ENCODE measurements at regions of chr3 and their contacts with region 1.

Region 1: GRCh38 chr3:107235928-107236315 is 141.3 kb upstream of the CCDC54 start:
- DNase-seq: no peak
- H3K4me3 ChIP-seq: peak overlapping the region; percentile 64
- H3K27ac ChIP-seq: peak overlapping the region; percentile 74
- H3K4me1 ChIP-seq: peaks cover 42% of the 10 kb centered on the region
- H3K27me3 ChIP-seq: no peaks in the 10 kb centered on the region
- CTCF ChIP-seq: peak; percentile 93

Region 2: DNA sequence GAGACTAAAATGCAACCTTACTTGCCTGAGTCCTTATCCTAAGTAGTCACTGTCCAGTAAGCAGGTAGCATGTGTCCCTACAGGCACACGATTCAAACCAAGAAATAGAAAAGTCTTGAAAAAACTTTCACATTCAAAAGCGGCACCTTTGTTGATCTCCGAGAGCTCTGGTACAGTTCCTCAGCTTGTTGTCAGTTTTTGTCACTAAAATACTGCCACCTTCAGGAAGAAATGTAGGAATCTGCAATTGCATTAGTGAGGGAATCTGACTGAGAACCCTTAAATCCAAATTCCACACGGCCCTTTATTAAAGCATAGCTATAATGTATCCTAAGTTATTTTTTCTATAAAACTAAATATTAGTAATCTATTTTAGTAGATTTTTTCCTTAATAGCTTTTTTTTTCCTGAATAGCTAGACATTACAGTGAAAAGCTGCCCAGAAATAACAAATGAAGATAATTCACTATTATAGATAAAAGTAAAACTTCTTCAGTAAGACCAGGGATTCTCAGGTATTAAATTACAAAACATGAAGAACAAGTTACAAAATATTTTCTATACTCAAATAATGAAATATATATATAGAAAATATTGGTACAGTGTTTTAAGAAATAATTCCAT is 185.4 kb after region 1 on chr3:
- intact Hi-C with region 1: loop called (anchors 2 kb)
- DNase-seq: no peak
- H3K4me3 ChIP-seq: peak overlapping the region; percentile 55
- H3K27ac ChIP-seq: no peak overlapping the region
- H3K4me1 ChIP-seq: no peaks in the 10 kb centered on the region
- H3K27me3 ChIP-seq: no peaks in the 10 kb centered on the region
- CTCF ChIP-seq: peak; percentile 85

Region 3: DNA sequence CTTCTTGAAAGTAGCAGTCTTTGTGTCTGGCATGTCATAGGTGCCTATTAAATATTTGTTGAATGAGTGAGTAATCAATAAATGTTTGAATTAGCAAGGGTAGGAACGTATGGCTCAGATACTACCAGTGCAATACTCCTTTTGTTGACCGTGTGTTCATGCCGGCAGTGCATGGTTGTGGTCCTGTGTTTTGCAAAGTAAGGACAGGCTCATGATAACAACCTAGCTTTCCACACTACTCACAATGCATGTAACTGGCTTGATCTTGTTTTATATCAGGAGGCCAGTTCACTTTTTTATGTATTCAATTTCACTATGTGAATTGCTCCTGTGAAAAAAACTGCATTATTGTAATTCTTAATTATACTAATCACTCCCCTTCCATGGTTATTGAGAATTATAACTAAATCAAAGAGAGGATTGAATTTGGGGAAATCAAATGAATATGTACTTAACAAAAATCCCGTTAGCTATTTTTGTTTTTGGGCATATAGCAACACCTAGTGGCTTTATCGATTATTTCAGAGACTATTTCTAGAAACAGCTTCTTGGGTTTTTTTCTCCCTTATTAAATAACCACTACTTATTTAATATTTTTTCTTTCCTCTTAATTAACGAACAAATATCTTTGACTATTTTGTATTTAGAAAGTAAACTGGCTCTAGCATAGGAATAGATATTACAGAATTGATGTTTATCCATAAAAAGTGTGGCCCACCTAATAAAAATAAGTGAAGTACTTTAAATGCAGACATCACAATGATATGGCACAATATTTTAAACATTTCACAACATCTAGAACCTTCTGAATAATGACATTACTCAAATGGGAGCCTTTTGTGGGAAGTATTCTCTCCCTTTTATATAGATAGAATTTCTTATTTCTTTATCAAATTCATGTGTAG is 505.3 kb after region 1 on chr3:
- intact Hi-C with region 1: loop called (anchors 5 kb)
- DNase-seq: no peak
- H3K4me3 ChIP-seq: no peak overlapping the region
- H3K27ac ChIP-seq: no peak overlapping the region
- H3K4me1 ChIP-seq: peaks cover 7% of the 10 kb centered on the region
- H3K27me3 ChIP-seq: no peaks in the 10 kb centered on the region
- CTCF ChIP-seq: peak; percentile 72